CD4-positive, alpha-beta memory T cell (primary cell): ENCODE measurements at regions of chr19 and their contacts with region 1.

Region 1: DNA sequence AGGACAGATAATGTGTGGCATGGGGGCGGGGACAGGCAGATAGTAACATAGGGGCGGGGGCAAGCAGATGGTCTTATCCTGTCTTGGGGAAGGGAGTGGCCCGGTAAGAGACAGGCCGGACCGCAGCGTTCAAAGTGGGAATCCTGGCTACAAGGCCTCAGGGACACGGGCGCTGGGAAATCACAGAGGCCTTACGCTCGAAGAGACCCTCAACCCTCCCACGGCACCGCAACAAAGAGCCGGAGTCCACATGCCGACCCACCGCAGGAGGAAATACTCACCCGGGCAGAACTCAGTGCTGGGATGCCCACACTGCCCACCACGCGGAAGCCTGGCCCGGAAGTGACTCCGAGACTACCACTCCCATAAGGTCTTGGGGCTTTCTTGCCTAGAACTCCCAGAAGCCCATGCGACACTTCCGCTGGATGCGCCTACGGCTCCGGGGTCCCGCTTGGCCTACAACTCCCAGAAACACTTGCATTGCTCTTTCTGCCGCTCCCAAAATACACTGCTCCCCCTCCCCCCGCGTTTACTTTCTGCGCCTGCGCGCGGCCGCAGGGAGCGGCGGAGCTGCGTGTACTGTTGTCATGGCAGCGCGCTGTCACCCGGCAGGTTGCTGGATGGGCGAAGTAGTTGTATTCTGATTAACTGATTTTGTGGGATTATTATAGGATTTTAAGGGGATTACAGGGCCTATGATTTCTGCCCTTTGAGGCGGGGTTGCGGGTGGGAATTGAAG is at the start of gene CTU1:
- DNase-seq: peak; percentile 98 to 100 (median 99)
- H3K4me3 ChIP-seq: peak within 1 kb of the TSS; percentile 70 to 98
- H3K4me3 Mint-ChIP-seq: peak within 1 kb of the TSS; percentile 94 to 100 (median 97)
- H3K27ac ChIP-seq: peak within 1 kb of the TSS; percentile 69
- H3K27ac Mint-ChIP-seq: peak within 1 kb of the TSS; percentile 93 to 100 (median 99)
- H3K4me1 ChIP-seq: peaks cover 19% of the 10 kb centered on the region
- H3K4me1 Mint-ChIP-seq: peaks cover 22 to 44% (median 34%) of the 10 kb centered on the region in 4 donors
- H3K27me3 ChIP-seq: no peaks in the 10 kb centered on the region
- H3K27me3 Mint-ChIP-seq: no peaks in the 10 kb centered on the region
- total RNA-seq, gene CTU1: 11.4 TPM

Region 2: GRCh38 chr19:50025024-50025789 is 1083.0 kb before region 1 on chr19 and contains the start of gene VRK3:
- CTCF ChIA-PET with region 1: no interaction called
- POLR2A ChIA-PET with region 1: no interaction called
- intact Hi-C with region 1: loop called (anchors 2 kb)
- DNase-seq: peak; percentile 98 to 100 (median 100)
- H3K4me3 ChIP-seq: peak within 1 kb of the TSS; percentile 53 to 98
- H3K4me3 Mint-ChIP-seq: peak within 1 kb of the TSS; percentile 96 to 99 (median 97)
- H3K27ac ChIP-seq: peak within 1 kb of the TSS; percentile 96
- H3K27ac Mint-ChIP-seq: peak within 1 kb of the TSS; percentile 98 to 100 (median 100)
- H3K4me1 ChIP-seq: peaks cover 33% of the 10 kb centered on the region
- H3K4me1 Mint-ChIP-seq: peaks cover 23 to 63% (median 41%) of the 10 kb centered on the region in 4 donors
- H3K27me3 ChIP-seq: no peaks in the 10 kb centered on the region
- H3K27me3 Mint-ChIP-seq: no peaks in the 10 kb centered on the region
- total RNA-seq, gene VRK3: 109 to 114 TPM

Region 3: GRCh38 chr19:51123381-51123800 is 15.2 kb after region 1 on chr19:
- CTCF ChIA-PET with region 1: no interaction called
- POLR2A ChIA-PET with region 1: interaction called, 8 read pairs
- intact Hi-C with region 1: loop called (anchors 1 kb)
- DNase-seq: peak; percentile 64 to 72 (median 69)
- H3K4me3 ChIP-seq: peak overlapping the region; percentile 42 to 43
- H3K4me3 Mint-ChIP-seq: peak overlapping the region; percentile 68 to 87 (median 84)
- H3K27ac ChIP-seq: peak overlapping the region; percentile 22
- H3K27ac Mint-ChIP-seq: peak overlapping the region; percentile 78 to 94 (median 90)
- H3K4me1 ChIP-seq: peaks cover 72% of the 10 kb centered on the region
- H3K4me1 Mint-ChIP-seq: peaks cover 48 to 89% (median 68%) of the 10 kb centered on the region in 4 donors
- H3K27me3 ChIP-seq: no peaks in the 10 kb centered on the region
- H3K27me3 Mint-ChIP-seq: no peaks in the 10 kb centered on the region

Region 4: DNA sequence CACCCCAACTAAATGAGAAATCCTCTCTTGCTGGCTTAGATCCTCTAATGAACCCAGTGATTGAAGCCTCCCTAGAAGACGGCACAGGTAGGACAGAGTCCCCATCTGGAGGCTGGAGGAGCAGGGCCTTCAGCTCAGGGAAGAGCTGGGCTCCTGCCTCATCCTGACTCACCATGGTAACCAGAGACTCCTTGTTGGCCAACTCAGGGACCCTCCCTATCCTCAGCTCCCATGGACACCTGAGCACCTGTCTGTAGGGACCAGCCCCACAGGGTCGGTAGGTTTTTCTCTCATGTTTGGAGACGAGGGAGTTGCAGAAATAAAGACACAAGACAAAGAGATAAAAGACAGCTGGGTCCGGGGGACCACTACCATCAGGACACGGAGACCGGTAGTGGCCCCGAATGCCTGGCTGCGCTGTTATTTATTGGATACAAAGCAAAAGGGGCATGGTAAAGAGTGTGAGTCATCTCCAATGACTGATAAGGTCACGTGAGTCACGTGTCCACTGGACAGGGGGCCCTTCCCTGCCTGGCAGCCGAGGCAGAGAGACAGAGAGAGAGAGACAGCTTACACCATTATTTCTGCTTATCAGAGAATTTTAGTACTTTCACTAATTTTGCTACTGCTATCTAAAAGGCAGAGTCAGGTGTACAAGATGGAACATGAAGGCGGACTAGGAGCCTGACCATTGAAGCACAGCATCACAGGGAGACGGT is 60.5 kb after region 1 on chr19:
- CTCF ChIA-PET with region 1: no interaction called
- POLR2A ChIA-PET with region 1: no interaction called
- intact Hi-C with region 1: loop called (anchors 1 kb)
- DNase-seq: peak in 1 of 5 donors; percentile 4
- H3K4me3 ChIP-seq: no peak overlapping the region
- H3K4me3 Mint-ChIP-seq: no peak overlapping the region
- H3K27ac ChIP-seq: no peak overlapping the region
- H3K27ac Mint-ChIP-seq: peak overlapping the region in 1 of 7 donors; percentile 29
- H3K4me1 ChIP-seq: peaks cover 20% of the 10 kb centered on the region
- H3K4me1 Mint-ChIP-seq: peaks cover 5 to 25% (median 15%) of the 10 kb centered on the region in 4 donors
- H3K27me3 ChIP-seq: peaks cover 7% of the 10 kb centered on the region
- H3K27me3 Mint-ChIP-seq: peaks cover 0 to 4% of the 10 kb centered on the region in 2 donors

Region 5: GRCh38 chr19:51593969-51594773 is 485.9 kb after region 1 on chr19:
- CTCF ChIA-PET with region 1: no interaction called
- POLR2A ChIA-PET with region 1: no interaction called
- intact Hi-C with region 1: loop called (anchors 1 kb)
- DNase-seq: peak; percentile 92 to 94 (median 93)
- H3K4me3 ChIP-seq: peak overlapping the region; percentile 91 to 93
- H3K4me3 Mint-ChIP-seq: peak overlapping the region; percentile 85 to 100 (median 96)
- H3K27ac ChIP-seq: peak overlapping the region; percentile 58
- H3K27ac Mint-ChIP-seq: peak overlapping the region; percentile 33 to 97 (median 93)
- H3K4me1 ChIP-seq: peaks cover 16% of the 10 kb centered on the region
- H3K4me1 Mint-ChIP-seq: peaks cover 16 to 25% (median 22%) of the 10 kb centered on the region in 4 donors
- H3K27me3 ChIP-seq: no peaks in the 10 kb centered on the region
- H3K27me3 Mint-ChIP-seq: peaks cover 2 to 11% of the 10 kb centered on the region in 2 donors